MCF 10A (cell line): ENCODE measurements at regions of chr11 and their contacts with region 1.

Region 1: DNA sequence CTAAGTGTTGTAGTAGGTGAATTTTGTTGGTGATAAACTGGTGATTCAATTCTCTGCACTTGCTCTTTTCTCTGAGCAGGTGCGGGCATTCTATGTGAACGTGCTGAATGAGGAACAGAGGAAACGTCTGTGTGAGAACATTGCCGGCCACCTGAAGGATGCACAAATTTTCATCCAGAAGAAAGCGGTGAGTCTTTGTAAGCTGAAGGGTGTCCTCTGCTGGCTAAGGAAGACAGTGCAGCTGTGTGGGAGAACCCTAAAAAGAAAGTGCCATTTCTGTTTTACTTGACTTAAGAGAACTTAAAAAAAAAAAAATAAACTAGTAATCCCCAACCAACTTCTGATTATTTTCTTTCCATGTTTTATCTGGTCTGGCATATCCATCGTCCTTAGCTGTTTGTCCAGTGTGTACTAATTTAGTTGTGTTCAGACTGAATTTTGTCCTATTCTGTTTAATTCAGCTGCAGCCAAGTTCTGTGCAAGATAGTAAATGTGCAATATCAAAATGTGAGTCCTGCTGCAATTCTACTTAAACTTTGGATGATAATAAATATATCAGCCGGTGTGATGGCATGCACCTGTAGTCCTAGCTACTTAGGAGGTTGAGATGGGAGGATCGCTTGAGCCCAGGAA is 29.6 kb downstream of the CAT start:
- DNase-seq: peak; percentile 57
- H3K4me3 Mint-ChIP-seq: no peak overlapping the region
- H3K27ac Mint-ChIP-seq: no peak overlapping the region
- H3K4me1 Mint-ChIP-seq: no peaks in the 10 kb centered on the region
- H3K27me3 Mint-ChIP-seq: no peaks in the 10 kb centered on the region
- CTCF ChIP-seq: peak; percentile 83

Region 2: DNA sequence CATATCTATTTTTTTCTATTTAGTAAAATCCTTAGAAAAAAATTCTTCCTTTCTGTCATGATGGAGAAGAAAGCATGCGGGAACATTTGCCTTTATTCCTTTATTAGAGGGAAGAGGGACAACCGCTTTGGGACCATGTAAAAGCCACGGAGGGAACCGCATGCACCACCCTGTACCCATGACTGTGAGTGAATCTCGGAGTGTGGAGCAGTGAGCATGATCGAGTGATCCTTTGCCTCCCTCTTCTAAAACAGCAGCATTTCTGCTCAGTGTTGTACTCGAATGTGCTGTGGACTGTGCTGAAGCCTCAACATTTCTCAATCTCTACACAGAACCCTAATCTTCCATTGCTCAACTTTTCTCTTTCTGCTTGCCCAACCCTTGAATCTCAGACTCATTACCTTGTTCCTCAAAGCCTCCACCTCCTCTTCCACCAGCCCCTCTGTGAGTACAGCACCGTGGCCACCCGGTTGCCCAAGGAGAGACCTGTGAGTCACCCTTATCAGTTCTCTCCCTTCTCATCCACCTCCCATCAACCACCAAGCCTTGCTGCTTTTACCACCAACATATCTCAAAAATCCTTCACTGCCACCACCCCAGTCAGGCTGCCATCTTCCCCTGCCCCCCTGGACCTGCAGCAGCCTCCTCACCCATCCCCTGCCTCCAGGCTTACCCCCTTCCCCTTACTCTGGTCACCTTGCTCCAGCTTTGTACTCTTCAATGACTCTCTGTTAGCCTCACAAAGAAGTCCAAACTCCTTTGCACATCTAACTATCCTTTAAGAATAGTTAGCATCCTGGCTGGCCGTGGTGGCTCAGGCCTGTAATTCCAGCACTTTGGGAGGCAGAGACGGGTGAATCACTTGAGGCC is 259.8 kb before region 1 on chr11:
- CTCF ChIA-PET with region 1: no interaction called
- POLR2A ChIA-PET with region 1: no interaction called
- intact Hi-C with region 1: no loop called
- DNase-seq: peak; percentile 66
- H3K4me3 Mint-ChIP-seq: no peak overlapping the region
- H3K27ac Mint-ChIP-seq: no peak overlapping the region
- H3K4me1 Mint-ChIP-seq: peaks cover 16% of the 10 kb centered on the region
- H3K27me3 Mint-ChIP-seq: no peaks in the 10 kb centered on the region
- CTCF ChIP-seq: no peak

Region 3: GRCh38 chr11:34449013-34449412 is 19.3 kb before region 1 on chr11:
- CTCF ChIA-PET with region 1: interaction called, 23 read pairs
- POLR2A ChIA-PET with region 1: no interaction called
- intact Hi-C with region 1: no loop called
- DNase-seq: no peak
- H3K4me3 Mint-ChIP-seq: no peak overlapping the region
- H3K27ac Mint-ChIP-seq: no peak overlapping the region
- H3K4me1 Mint-ChIP-seq: no peaks in the 10 kb centered on the region
- H3K27me3 Mint-ChIP-seq: no peaks in the 10 kb centered on the region
- CTCF ChIP-seq: no peak

Region 4: GRCh38 chr11:34487430-34487829 is 19.1 kb after region 1 on chr11:
- CTCF ChIA-PET with region 1: interaction called, 15 read pairs
- POLR2A ChIA-PET with region 1: interaction called, 4 read pairs
- intact Hi-C with region 1: no loop called
- DNase-seq: no peak
- H3K4me3 Mint-ChIP-seq: no peak overlapping the region
- H3K27ac Mint-ChIP-seq: no peak overlapping the region
- H3K4me1 Mint-ChIP-seq: no peaks in the 10 kb centered on the region
- H3K27me3 Mint-ChIP-seq: no peaks in the 10 kb centered on the region
- CTCF ChIP-seq: no peak